Natural killer cell (primary cell): ENCODE measurements at regions of chr1 and their contacts with region 1.

Region 1: GRCh38 chr1:212477014-212477679 is 44.4 kb downstream of the NENF start:
- DNase-seq: peak; percentile 66 to 89
- ATAC-seq: peak; percentile 79 to 87 (median 81)
- H3K4me3 ChIP-seq: no peak overlapping the region
- H3K4me3 Mint-ChIP-seq: no peak overlapping the region
- H3K27ac ChIP-seq: no peak overlapping the region
- H3K27ac Mint-ChIP-seq: peak overlapping the region in 1 of 2 donors; percentile 73
- H3K4me1 ChIP-seq: peaks cover 36% of the 10 kb centered on the region
- H3K4me1 Mint-ChIP-seq: peaks cover 33 to 46% of the 10 kb centered on the region in 2 donors
- H3K27me3 ChIP-seq: no peaks in the 10 kb centered on the region
- H3K27me3 Mint-ChIP-seq: peaks cover 9 to 15% of the 10 kb centered on the region in 2 donors
- CTCF ChIP-seq: peak; percentile 86

Region 2: DNA sequence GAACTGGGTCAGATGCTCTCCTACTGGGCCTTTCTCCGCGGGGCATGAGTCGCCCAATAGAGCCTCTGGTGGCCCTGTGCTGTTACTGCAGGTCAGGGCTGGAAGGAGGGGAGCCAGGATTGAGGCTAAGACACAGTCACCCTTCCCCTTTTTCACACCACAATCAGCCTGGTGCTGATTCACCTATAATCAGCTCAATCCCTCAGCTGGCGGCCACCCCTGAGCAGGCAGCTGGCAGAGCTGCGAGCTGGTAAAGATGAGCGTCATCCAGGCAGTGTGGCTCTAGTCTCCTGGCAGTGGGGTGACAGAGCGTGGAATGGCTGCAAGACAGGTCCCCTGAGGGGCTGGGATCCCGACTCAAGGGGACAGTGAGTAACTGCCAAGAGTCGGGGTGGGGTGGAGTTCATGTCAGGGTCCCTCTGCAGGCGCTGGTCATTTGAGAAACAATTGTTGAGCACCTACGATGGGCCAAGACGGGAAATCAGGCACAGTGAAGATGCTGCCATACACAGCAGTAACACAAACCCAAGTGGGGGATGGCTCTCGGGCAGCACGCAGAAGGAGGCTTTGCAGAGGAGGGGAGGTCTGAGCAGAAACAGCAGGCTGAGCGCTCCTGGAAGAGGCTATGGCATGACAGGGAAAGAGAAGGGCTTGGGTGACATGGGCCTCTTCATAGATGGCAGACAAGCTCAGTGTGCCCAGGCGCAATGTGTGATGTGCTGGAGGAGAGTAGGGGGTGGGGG is 153.2 kb after region 1 on chr1:
- intact Hi-C with region 1: loop called (anchors 2 kb)
- DNase-seq: peak; percentile 53 to 78
- ATAC-seq: peak; percentile 93 to 99 (median 97)
- H3K4me3 ChIP-seq: no peak overlapping the region
- H3K4me3 Mint-ChIP-seq: no peak overlapping the region
- H3K27ac ChIP-seq: no peak overlapping the region
- H3K27ac Mint-ChIP-seq: no peak overlapping the region
- H3K4me1 ChIP-seq: peaks cover 9% of the 10 kb centered on the region
- H3K4me1 Mint-ChIP-seq: peaks cover 7 to 8% of the 10 kb centered on the region in 2 donors
- H3K27me3 ChIP-seq: no peaks in the 10 kb centered on the region
- H3K27me3 Mint-ChIP-seq: peaks cover 13 to 17% of the 10 kb centered on the region in 2 donors
- CTCF ChIP-seq: peak; percentile 91

Region 3: DNA sequence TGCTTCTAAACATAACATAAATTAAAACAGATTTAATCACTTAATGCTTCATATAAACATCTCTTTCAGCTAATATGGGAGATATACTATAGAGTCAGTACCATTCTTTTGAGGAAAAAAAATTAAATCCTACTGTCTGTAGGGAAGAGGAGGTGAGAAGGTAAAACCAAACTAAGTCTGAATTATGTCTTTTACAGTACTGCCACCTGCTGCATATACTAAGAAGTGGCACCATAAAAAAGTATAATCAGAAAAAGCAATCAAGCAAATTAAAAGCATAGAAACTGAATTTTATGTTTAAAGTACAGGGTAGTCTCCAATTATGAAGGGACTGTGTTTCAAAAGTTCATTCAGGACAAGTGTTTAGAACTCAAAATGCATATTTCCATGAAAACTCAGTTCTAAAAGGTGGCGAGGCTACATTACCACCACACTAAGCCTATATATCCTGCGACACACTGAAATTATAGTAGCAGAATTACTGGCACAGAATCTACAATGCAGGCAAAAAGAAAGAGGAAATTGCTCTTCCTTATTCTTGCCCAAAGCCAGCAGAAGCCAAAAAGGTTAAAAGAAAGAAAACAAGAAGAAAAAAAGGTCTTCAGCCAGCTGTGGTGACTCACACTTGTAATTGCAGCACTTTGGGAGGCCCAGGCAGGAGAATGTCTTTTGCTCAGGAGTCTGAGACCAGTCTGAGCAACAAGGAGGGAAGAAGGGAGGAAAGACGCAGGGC is 305.4 kb after region 1 on chr1:
- intact Hi-C with region 1: loop called (anchors 1 kb)
- DNase-seq: peak in 1 of 2 donors; percentile 60
- ATAC-seq: peak; percentile 49 to 73 (median 60)
- H3K4me3 ChIP-seq: no peak overlapping the region
- H3K4me3 Mint-ChIP-seq: no peak overlapping the region
- H3K27ac ChIP-seq: no peak overlapping the region
- H3K27ac Mint-ChIP-seq: peak overlapping the region in 1 of 2 donors; percentile 10
- H3K4me1 ChIP-seq: no peaks in the 10 kb centered on the region
- H3K4me1 Mint-ChIP-seq: peaks cover 5 to 11% of the 10 kb centered on the region in 2 donors
- H3K27me3 ChIP-seq: no peaks in the 10 kb centered on the region
- H3K27me3 Mint-ChIP-seq: no peaks in the 10 kb centered on the region
- CTCF ChIP-seq: peak; percentile 73